ENCODE measurements at regions of chr14 and their contacts with region 1.

Region 1: GRCh38 chr14:105899071-105899641 is 372.8 kb downstream of the TMEM121 start:
- DNase-seq: peak; percentile 83 to 91 (median 85)
- H3K4me3 ChIP-seq: peak overlapping the region; percentile 5 to 96 (median 67)
- H3K27ac ChIP-seq: peak overlapping the region in 1 of 2 experiments; percentile 14
- H3K4me1 ChIP-seq: peaks cover 0 to 98% (median 87%) of the 10 kb centered on the region in 4 experiments
- H3K27me3 ChIP-seq: no peaks in the 10 kb centered on the region

Region 2: GRCh38 chr14:105926373-105927095 is 27.4 kb after region 1 on chr14:
- CTCF ChIA-PET with region 1: interaction called, 22 read pairs
- POLR2A ChIA-PET with region 1: interaction called, 3 read pairs
- DNase-seq: peak in 2 of 3 donors; percentile 55 to 59
- H3K4me3 ChIP-seq: no peak overlapping the region
- H3K27ac ChIP-seq: no peak overlapping the region
- H3K4me1 ChIP-seq: peaks cover 0 to 48% (median 29%) of the 10 kb centered on the region in 4 experiments
- H3K27me3 ChIP-seq: no peaks in the 10 kb centered on the region

Region 3: DNA sequence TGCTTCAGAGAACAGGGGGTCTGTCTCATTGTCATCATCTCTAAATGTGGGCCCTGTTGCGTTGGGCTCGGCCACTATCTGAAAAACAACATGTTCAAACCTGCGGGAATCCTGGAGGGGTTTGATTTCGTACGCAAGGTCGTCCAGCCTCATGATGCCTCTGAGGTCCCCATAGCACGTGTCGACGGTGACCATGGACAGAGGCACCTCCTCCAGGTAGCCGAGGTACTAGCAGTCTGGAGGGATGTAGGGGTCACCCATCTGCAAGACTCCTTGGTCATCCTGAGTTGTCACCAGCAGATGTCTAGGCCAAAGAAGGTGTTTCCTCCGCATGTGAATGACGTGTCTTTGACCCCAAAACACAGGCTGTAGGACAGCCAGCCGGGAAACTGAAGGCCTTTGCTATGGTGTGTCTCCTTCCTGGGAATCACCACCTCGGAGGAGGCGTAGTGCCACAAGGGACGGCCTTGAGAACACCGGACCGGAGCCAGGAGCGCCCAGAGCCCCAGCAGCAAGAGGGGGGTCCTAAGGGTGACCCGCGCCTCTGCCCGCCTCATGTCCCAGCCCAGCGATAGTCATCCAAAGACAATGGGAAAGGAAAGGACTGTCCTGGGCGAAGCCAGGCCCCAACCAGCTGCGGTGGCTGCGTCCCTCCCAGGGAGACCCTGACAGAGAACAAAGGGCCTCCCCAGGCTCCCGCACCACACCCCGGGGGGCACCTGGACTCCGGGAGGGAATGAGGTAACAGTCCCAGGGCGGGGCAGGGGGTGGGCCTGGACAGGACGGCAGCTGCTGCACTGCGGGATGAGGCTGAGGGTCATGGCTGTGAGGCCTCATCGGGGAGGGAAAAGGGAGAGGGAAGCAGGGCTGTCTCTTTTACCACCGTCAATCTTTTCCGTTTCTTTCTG is 72.7 kb after region 1 on chr14:
- CTCF ChIA-PET with region 1: no interaction called
- POLR2A ChIA-PET with region 1: no interaction called
- DNase-seq: no peak
- H3K4me3 ChIP-seq: no peak overlapping the region
- H3K27ac ChIP-seq: no peak overlapping the region
- H3K4me1 ChIP-seq: peaks cover 0 to 14% (median 5%) of the 10 kb centered on the region in 4 experiments
- H3K27me3 ChIP-seq: no peaks in the 10 kb centered on the region

Measured in common myeloid progenitor, CD34-positive (primary cell).